Mammary epithelial cell (primary cell): ENCODE measurements at regions of chr1 and their contacts with region 1.

Region 1: GRCh38 chr1:182015360-182015759 is 46.2 kb downstream of the ZNF648 start:
- DNase-seq: no peak
- H3K4me3 ChIP-seq: no peak overlapping the region
- H3K27ac ChIP-seq: no peak overlapping the region
- H3K4me1 ChIP-seq: no peaks in the 10 kb centered on the region
- H3K27me3 ChIP-seq: no peaks in the 10 kb centered on the region
- CTCF ChIP-seq: no peak

Region 2: DNA sequence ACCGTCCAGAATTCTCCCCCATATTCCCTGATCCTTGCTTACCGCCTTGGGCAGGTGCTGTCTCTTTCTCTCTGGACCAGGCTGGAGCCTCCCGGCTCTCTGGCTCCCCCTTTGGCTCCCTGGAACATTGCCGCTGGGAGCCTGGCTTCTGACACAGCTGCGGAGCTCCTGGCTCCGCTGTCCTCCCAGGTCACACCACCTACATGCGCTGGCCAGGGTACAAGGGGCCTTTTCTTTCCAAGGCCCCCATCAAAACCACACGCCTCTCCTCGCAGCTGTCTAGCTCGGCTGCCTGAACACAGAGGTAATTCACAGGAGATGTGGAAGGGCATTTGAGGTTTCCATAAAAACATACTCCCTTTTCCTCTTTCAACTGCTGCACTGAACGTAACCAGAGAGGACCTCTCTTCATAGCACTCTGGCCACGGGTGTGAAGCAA is 53.7 kb after region 1 on chr1:
- CTCF ChIA-PET with region 1: no interaction called
- dilution Hi-C with region 1: loop called (anchors 5 kb)
- in situ Hi-C with region 1: no loop called
- intact Hi-C with region 1: no loop called
- DNase-seq: peak; percentile 56
- H3K4me3 ChIP-seq: no peak overlapping the region
- H3K27ac ChIP-seq: no peak overlapping the region
- H3K4me1 ChIP-seq: no peaks in the 10 kb centered on the region
- H3K27me3 ChIP-seq: peaks cover 2% of the 10 kb centered on the region
- CTCF ChIP-seq: peak; percentile 90 to 96

Region 3: GRCh38 chr1:182279724-182280503 is 264.6 kb after region 1 on chr1:
- CTCF ChIA-PET with region 1: no interaction called
- dilution Hi-C with region 1: no loop called
- in situ Hi-C with region 1: no loop called
- intact Hi-C with region 1: no loop called
- DNase-seq: no peak
- H3K4me3 ChIP-seq: no peak overlapping the region
- H3K27ac ChIP-seq: no peak overlapping the region
- H3K4me1 ChIP-seq: no peaks in the 10 kb centered on the region
- H3K27me3 ChIP-seq: no peaks in the 10 kb centered on the region
- CTCF ChIP-seq: no peak